ENCODE measurements at regions of chr5 and their contacts with region 1.

Region 1: GRCh38 chr5:121737117-121737516 is 114.6 kb upstream of the FTMT start:
- DNase-seq: no peak
- ATAC-seq: no peak
- H3K4me3 ChIP-seq: no peak overlapping the region
- H3K4me3 Mint-ChIP-seq: no peak overlapping the region
- H3K27ac ChIP-seq: no peak overlapping the region
- H3K27ac Mint-ChIP-seq: no peak overlapping the region
- H3K4me1 ChIP-seq: no peaks in the 10 kb centered on the region
- H3K4me1 Mint-ChIP-seq: no peaks in the 10 kb centered on the region
- H3K27me3 ChIP-seq: no peaks in the 10 kb centered on the region
- H3K27me3 Mint-ChIP-seq: no peaks in the 10 kb centered on the region
- CTCF ChIP-seq: no peak

Region 2: GRCh38 chr5:121755266-121755665 is 18.1 kb after region 1 on chr5:
- CTCF ChIA-PET with region 1: no interaction called
- POLR2A ChIA-PET with region 1: no interaction called
- intact Hi-C with region 1: loop called in 1 of 2 experiments (anchors 1 kb)
- DNase-seq: no peak
- ATAC-seq: no peak
- H3K4me3 ChIP-seq: no peak overlapping the region
- H3K4me3 Mint-ChIP-seq: no peak overlapping the region
- H3K27ac ChIP-seq: no peak overlapping the region
- H3K27ac Mint-ChIP-seq: no peak overlapping the region
- H3K4me1 ChIP-seq: no peaks in the 10 kb centered on the region
- H3K4me1 Mint-ChIP-seq: no peaks in the 10 kb centered on the region
- H3K27me3 ChIP-seq: no peaks in the 10 kb centered on the region
- H3K27me3 Mint-ChIP-seq: no peaks in the 10 kb centered on the region
- CTCF ChIP-seq: no peak